ENCODE measurements at regions of chr10 and their contacts with region 1.

Region 1: GRCh38 chr10:3785257-3785850 is 345 bp upstream of the KLF6 start:
- DNase-seq: peak; percentile 99
- H3K4me3 ChIP-seq: peak overlapping the region; percentile 73 to 97 (median 90)
- H3K27ac ChIP-seq: peak overlapping the region; percentile 98 to 100 (median 100)
- H3K4me1 ChIP-seq: peaks cover 0 to 20% (median 18%) of the 10 kb centered on the region in 4 donors
- H3K27me3 ChIP-seq: no peaks in the 10 kb centered on the region
- CTCF ChIP-seq: no peak
- EP300 ChIP-seq: peak in 2 of 4 donors; percentile 24 to 75
- POLR2A ChIP-seq: peak; percentile 72 to 88

Region 2: DNA sequence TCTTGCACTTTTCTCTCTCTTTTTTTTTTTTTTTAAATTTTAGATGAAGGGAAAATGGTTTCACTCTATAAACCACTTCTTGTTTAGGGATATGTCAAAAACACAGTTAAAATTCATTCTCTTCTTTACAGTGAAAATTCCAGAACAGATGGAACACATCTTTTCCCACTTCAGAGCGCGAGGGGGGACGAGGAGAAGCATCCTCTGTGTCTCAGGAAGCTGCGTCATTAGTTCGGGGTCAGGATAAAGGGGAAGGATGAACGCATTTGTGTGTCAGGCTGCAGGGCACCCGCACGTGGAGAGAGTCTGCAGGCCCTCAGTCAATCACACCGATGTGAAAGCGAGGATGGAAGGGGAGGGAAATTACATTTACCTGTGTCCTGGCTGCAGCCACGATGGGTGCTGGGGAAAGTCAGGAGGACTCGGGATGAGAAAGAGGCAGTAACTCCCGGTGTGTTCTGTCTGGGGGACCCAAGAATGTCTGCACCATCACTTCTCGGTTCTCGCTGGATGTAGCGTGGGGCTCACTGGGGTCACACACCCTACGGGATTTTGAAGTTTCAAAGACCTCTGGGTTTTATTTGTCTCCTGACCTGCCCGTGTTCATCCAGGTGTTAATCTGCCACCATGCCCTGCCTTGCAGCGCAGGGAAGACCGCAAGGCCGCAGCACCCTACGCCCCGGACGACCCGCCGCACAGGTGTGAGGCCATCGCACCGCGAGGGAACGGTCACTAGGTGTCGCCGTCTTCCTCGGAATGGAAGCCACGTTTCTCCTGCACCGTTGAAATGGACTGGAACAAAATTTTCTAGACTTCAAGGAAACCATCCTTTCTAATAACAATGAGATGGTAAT is 546.1 kb before region 1 on chr10:
- intact Hi-C with region 1: loop called (anchors 2 kb)
- DNase-seq: peak; percentile 86
- H3K4me3 ChIP-seq: no peak overlapping the region
- H3K27ac ChIP-seq: peak overlapping the region in 3 of 4 donors; percentile 2 to 52 (median 38)
- H3K4me1 ChIP-seq: peaks cover 0 to 17% (median 3%) of the 10 kb centered on the region in 4 donors
- H3K27me3 ChIP-seq: no peaks in the 10 kb centered on the region
- CTCF ChIP-seq: peak; percentile 81 to 93 (median 90)
- EP300 ChIP-seq: no peak
- POLR2A ChIP-seq: no peak

Region 3: DNA sequence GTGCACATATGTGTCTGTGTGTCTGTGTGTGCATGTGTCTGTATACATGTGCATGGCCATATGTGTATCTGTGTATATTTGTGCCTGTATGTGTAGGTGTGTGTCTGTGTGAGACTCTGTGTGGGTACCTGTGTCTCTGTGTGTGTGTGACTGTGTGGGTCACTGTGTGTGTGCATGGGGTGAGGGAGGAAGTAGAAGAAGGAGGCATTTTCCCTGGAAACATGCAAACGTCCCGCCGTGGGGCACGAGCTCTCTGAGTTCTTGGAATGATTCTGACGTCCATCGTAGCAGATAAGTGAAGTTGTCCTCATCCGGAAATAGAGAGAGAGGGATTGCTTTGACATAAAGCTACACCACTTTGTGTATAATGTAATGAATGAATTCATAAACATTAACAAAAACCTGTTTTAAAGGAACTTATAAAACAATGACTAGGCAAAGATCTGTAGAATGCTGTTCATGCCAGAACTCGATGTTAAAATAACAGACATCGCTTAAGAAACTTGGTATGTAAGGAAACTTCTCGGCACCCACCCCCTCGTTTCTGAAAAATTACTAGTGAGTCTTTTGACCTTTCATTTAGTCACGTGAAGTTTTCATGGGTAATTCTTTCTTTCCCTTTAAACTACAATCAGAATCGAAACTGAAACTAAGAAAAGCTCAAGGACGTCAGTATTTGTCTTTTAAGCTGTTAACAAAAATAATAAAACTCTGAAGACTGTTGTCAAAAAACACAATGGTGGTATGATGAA is 43.2 kb after region 1 on chr10:
- intact Hi-C with region 1: loop called (anchors 2 kb)
- DNase-seq: peak; percentile 72
- H3K4me3 ChIP-seq: peak overlapping the region; percentile 36 to 50 (median 47)
- H3K27ac ChIP-seq: peak overlapping the region; percentile 76 to 84 (median 80)
- H3K4me1 ChIP-seq: peaks cover 0 to 24% (median 19%) of the 10 kb centered on the region in 4 donors
- H3K27me3 ChIP-seq: no peaks in the 10 kb centered on the region
- CTCF ChIP-seq: no peak
- EP300 ChIP-seq: no peak
- POLR2A ChIP-seq: no peak

Region 4: DNA sequence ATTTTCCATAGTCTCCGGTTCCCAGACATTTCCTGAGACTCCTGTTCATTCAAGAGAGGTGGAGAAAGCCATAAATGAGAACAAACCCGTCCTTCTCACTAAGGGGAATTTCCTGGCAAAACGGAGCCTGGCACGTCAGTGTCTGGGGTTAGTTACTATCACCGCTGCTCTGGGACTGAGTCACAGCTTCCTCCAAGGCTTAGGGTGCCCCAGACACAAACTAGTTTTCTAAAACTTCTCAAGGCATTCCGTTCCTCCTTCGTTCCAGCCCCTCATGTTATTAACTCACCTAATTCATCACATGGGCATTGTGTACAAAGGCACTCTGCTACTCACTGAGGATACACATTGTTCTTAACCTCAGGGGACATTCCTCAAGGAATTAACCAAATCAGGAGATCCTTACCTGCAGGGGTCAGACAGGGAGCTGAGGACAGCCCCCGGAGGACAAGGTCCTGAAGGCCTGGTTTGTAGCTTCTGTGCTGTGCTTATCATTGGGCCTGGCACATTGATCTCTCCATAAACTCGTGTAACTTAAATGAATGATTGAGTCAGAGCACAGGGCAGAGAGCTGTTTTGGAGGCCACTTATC is 102.6 kb after region 1 on chr10:
- intact Hi-C with region 1: loop called (anchors 1 kb)
- DNase-seq: peak; percentile 83
- H3K4me3 ChIP-seq: no peak overlapping the region
- H3K27ac ChIP-seq: peak overlapping the region; percentile 84 to 93 (median 89)
- H3K4me1 ChIP-seq: peaks cover 0 to 31% (median 24%) of the 10 kb centered on the region in 4 donors
- H3K27me3 ChIP-seq: no peaks in the 10 kb centered on the region
- CTCF ChIP-seq: no peak
- EP300 ChIP-seq: peak in 2 of 4 donors; percentile 77 to 92
- POLR2A ChIP-seq: no peak

Region 5: DNA sequence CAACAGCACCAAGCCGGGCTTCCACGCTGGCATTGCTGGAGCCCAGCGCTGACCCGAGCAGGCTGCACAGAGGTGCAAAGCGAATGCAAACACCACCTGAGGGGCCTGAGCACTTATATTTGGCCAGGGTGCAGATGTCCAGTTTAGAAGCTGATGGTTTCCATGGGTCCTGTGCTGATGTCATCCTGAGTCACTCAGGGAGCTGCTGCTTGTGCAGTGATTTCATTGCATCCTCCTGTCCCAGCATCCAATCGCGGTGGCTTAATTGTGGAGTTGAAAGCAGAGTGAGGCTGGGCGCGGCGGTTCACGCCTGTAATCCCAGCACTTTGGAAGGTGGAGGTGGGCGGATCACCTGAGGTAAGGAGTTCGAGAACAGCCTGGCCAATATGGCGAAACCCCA is 409.9 kb after region 1 on chr10:
- intact Hi-C with region 1: loop called (anchors 5 kb)
- DNase-seq: no peak
- H3K4me3 ChIP-seq: no peak overlapping the region
- H3K27ac ChIP-seq: peak overlapping the region in 2 of 4 donors; percentile 74 to 83
- H3K4me1 ChIP-seq: peaks cover 0 to 33% (median 26%) of the 10 kb centered on the region in 4 donors
- H3K27me3 ChIP-seq: no peaks in the 10 kb centered on the region
- CTCF ChIP-seq: no peak
- EP300 ChIP-seq: no peak
- POLR2A ChIP-seq: no peak

Region 6: GRCh38 chr10:4267086-4267773 is 481.9 kb after region 1 on chr10:
- intact Hi-C with region 1: loop called (anchors 5 kb)
- DNase-seq: no peak
- H3K4me3 ChIP-seq: no peak overlapping the region
- H3K27ac ChIP-seq: peak overlapping the region; percentile 30 to 59 (median 41)
- H3K4me1 ChIP-seq: peaks cover 0 to 49% (median 38%) of the 10 kb centered on the region in 4 donors
- H3K27me3 ChIP-seq: no peaks in the 10 kb centered on the region
- CTCF ChIP-seq: peak in 1 of 4 experiments; percentile 12
- EP300 ChIP-seq: no peak
- POLR2A ChIP-seq: no peak

Region 7: DNA sequence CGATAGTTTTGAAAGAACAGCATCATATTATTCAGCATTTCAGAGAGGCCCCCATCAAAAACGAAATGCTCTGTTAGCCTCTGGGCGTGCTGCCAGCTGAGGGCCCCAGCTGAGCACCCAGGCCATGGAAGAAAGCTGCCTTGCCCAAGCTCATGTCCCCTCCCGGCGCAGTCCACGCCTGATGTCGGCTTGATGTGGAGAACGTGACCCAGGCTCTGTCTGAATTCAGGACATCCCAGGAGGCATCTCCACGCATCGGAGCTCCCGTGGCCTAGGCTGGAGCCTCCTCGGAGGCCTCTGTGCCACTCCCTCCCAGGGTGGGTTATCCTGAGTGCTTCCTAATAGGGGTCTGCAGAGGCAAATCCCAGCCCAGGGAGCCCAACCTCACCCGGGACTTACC is 822.3 kb after region 1 on chr10:
- intact Hi-C with region 1: no loop called
- DNase-seq: no peak
- H3K4me3 ChIP-seq: no peak overlapping the region
- H3K27ac ChIP-seq: no peak overlapping the region
- H3K4me1 ChIP-seq: no peaks in the 10 kb centered on the region
- H3K27me3 ChIP-seq: no peaks in the 10 kb centered on the region
- CTCF ChIP-seq: no peak
- EP300 ChIP-seq: no peak
- POLR2A ChIP-seq: no peak

Region 8: DNA sequence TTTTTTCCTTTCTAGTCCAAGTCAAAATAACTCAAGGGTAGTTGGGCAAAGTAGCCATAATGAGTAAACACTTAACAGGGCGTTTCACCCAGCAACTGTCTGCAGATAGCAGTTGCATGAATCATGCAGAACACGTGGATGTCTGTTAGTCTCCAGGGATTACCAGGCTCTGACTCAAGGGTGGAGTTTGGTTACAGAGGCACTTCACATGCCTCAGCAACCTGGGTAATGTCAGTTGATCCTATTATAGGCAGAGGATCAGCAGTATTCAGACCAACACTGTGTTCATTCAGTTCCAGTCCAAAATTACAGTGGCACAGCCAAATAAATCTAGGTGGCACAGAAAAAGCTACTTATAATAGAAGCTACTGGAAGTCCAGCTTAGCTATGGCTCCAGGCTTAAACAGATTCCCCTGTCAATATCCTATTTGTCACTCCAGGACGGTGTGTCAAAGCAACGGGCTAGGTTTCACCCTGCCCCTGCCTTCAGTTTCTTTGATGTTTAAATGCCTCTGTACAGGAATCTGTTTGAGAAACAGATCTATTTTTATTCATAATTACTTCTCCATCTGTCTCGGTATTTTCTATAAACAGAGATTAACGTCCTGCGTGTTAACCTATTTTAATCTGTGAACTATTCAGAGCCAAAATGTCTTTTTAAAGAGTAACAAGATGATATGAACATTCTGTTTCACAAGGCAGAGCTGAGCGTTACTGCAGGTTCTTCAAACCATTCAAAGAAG is 878.0 kb after region 1 on chr10:
- intact Hi-C with region 1: loop called (anchors 2 kb)
- DNase-seq: peak; percentile 92
- H3K4me3 ChIP-seq: peak overlapping the region in 1 of 4 donors; percentile 21
- H3K27ac ChIP-seq: peak overlapping the region; percentile 76 to 93 (median 84)
- H3K4me1 ChIP-seq: peaks cover 0 to 31% (median 28%) of the 10 kb centered on the region in 4 donors
- H3K27me3 ChIP-seq: no peaks in the 10 kb centered on the region
- CTCF ChIP-seq: no peak
- EP300 ChIP-seq: peak; percentile 80 to 99 (median 92)
- POLR2A ChIP-seq: no peak